Activated naive CD4-positive, alpha-beta T cell treated with anti-CD3 and anti-CD28 coated beads for 36 hours (primary cell): ENCODE measurements at regions of chrX and their contacts with region 1.

Region 1: GRCh38 chrX:131830400-131831184 is 192.5 kb upstream of the STK26 start:
- DNase-seq: peak; percentile 85
- H3K4me3 Mint-ChIP-seq: peak overlapping the region; percentile 87
- H3K27ac Mint-ChIP-seq: peak overlapping the region; percentile 94
- H3K4me1 Mint-ChIP-seq: peaks cover 31% of the 10 kb centered on the region
- H3K27me3 Mint-ChIP-seq: no peaks in the 10 kb centered on the region

Region 2: GRCh38 chrX:131548995-131549394 is 281.6 kb before region 1 on chrX:
- CTCF ChIA-PET with region 1: no interaction called
- intact Hi-C with region 1: no loop called
- DNase-seq: no peak
- H3K4me3 Mint-ChIP-seq: no peak overlapping the region
- H3K27ac Mint-ChIP-seq: no peak overlapping the region
- H3K4me1 Mint-ChIP-seq: no peaks in the 10 kb centered on the region
- H3K27me3 Mint-ChIP-seq: no peaks in the 10 kb centered on the region

Region 3: GRCh38 chrX:131792789-131793462 is 37.7 kb before region 1 on chrX:
- CTCF ChIA-PET with region 1: no interaction called
- intact Hi-C with region 1: no loop called
- DNase-seq: no peak
- H3K4me3 Mint-ChIP-seq: no peak overlapping the region
- H3K27ac Mint-ChIP-seq: no peak overlapping the region
- H3K4me1 Mint-ChIP-seq: no peaks in the 10 kb centered on the region
- H3K27me3 Mint-ChIP-seq: no peaks in the 10 kb centered on the region

Region 4: DNA sequence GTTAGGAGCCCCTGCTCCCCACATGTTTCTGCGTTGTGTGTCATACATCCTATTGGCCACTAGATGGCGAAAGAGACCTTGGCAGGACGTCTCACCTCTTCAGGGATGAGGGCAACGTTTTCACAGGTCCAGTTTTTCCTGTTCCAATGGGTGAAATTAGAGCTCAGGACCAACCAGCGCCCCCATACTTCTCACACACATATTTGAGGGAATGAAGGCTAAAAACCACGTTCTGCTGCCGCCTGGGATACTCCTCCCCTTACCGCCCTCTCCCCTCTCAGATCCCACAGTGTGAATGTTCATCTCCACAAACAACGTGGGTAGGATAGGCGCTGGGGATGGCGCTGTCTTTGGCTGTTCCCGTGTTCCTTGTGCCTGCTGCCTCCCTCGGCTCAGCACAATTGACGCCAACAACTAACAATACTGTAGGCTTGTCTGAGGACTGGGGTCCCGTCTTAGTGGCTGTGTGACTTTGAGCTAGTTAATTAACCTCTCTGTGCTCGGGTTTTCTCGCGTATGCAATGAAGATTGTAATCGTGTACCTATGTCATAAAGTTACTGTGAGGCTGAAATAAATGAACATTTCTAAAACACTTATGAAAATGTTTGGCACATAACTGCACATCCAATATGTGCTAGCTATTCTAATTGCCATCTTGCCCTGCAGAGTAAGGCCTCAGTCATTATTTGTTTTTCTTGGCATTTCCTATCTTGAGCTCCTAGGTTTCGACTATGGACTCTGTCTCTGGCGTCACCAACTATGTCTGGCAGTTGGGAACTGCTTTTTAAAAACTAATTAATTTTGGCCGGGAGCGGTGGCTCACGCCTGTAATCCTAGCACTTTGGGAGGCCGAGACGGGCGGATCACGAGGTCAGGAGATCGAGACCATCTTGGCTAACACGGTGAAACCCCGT is 11.2 kb after region 1 on chrX:
- CTCF ChIA-PET with region 1: interaction called, 10 read pairs
- intact Hi-C with region 1: no loop called
- DNase-seq: peak; percentile 25
- H3K4me3 Mint-ChIP-seq: no peak overlapping the region
- H3K27ac Mint-ChIP-seq: no peak overlapping the region
- H3K4me1 Mint-ChIP-seq: peaks cover 4% of the 10 kb centered on the region
- H3K27me3 Mint-ChIP-seq: no peaks in the 10 kb centered on the region

Region 5: DNA sequence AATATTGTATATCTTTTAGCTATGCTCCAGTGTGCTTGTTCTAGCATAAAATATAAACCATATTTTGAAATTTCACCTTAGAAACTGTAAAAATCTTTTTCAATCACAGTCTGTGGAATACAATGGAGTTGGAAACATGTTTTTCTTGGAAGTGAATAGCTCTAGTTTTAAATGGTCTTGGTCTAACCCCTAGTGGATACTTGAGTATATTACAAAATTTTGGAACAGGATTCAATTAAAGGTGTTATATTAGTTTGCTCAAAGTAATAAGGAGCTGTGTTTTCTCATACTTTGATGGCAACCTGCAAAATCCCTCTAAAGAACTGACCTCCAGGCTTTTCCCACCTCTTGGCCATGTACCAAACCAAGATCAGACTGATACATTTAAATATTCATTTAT is 240.7 kb after region 1 on chrX:
- CTCF ChIA-PET with region 1: interaction called, 3 read pairs
- intact Hi-C with region 1: loop called (anchors 10 kb)
- DNase-seq: no peak
- H3K4me3 Mint-ChIP-seq: no peak overlapping the region
- H3K27ac Mint-ChIP-seq: no peak overlapping the region
- H3K4me1 Mint-ChIP-seq: no peaks in the 10 kb centered on the region
- H3K27me3 Mint-ChIP-seq: no peaks in the 10 kb centered on the region

Region 6: GRCh38 chrX:132266583-132267355 is 436.2 kb after region 1 on chrX:
- CTCF ChIA-PET with region 1: no interaction called
- intact Hi-C with region 1: loop called (anchors 5 kb)
- DNase-seq: peak; percentile 15
- H3K4me3 Mint-ChIP-seq: no peak overlapping the region
- H3K27ac Mint-ChIP-seq: no peak overlapping the region
- H3K4me1 Mint-ChIP-seq: peaks cover 11% of the 10 kb centered on the region
- H3K27me3 Mint-ChIP-seq: no peaks in the 10 kb centered on the region

Region 7: DNA sequence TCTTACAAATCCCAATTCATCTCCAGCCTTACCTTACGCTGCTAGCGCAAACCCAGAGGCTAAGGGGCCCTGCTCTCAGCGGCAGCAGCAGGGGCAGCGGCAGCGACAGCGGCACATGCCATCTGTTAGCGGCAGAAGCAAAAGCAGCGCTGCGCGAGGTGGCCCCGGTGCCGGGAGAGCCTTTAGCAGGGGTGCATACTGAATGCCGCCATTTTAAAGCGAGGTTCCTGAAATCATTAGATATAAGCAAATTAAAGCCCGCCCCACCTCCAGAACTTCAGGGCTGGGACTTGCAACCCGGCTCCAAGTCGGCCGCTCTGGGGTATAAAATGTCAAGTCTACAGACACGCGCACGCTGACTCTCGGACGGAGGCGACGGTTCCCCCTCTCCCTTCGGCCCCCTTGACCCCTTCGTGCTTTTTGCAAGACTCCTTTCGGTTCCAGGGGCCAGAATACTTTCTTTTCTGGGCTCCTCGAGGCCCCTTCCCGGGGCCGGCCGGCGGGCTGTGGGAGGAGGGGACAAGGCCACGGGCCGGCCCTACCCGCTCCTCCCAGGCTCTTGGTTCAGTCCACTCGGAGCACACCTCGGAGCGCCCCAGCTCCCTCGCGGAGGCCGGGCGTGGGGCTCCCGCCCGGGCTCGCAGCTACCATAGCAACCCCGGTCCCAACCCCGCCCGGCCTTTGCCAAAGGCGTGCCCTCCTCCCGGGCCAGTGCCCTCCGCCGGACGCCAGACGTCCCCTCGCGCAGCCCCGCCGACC is 658.4 kb after region 1 on chrX and contains the start of gene MBNL3:
- CTCF ChIA-PET with region 1: no interaction called
- intact Hi-C with region 1: loop called (anchors 2 kb)
- DNase-seq: peak; percentile 63
- H3K4me3 Mint-ChIP-seq: peak within 1 kb of the TSS; percentile 95
- H3K27ac Mint-ChIP-seq: peak within 1 kb of the TSS; percentile 96
- H3K4me1 Mint-ChIP-seq: peaks cover 33% of the 10 kb centered on the region
- H3K27me3 Mint-ChIP-seq: no peaks in the 10 kb centered on the region
- total RNA-seq, gene MBNL3: 14.2 to 15.8 TPM